ENCODE measurements at regions of chr22 and their contacts with region 1.

Region 1: DNA sequence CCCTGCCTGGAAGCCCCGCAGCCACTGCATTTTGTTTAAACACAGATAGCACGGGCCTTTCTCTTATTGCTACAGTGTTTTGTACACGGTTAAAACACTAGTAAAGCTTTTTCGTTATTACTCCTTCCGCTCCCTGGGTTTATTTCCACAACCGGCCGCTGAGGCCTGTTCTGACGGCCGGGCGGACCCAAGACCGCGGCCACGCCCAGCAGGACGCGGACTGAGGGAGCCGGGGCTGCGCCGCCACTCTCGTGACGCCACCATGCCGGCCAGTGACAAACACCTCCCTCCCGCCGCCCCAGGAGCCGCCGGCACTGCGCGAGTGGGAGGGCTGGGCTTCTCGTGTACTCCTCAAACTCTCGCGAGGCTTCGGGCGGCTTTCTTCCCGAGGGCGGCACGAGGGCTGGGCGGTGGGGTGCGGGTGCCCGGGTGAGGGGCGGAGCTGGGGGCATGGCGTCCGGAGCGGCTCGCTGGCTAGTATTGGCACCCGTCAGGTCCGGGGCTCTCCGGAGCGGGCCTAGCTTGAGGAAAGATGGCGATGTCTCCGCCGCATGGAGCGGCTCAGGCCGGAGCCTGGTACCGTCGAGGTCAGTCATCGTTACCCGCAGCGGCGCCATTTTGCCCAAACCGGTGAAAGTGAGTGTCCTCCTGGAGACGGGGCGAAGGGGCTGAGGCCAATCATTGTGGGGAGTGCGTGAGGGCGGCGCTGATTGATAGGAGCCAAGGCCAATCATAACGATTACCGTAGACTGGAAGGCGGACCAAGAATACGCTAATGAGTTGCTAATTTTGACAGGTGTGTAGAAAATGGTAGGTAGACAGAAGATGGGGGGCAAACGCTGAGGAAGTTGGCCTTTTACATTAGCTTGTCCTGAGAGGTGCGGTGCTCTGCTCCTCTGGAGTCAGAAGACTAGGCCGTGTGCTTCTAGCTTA is at the start of gene SMDT1:
- DNase-seq: peak; percentile 92 to 100
- H3K4me3 ChIP-seq: peak within 1 kb of the TSS; percentile 67 to 72
- H3K27ac ChIP-seq: peak within 1 kb of the TSS; percentile 95 to 96
- H3K4me1 ChIP-seq: peaks cover 0 to 38% of the 10 kb centered on the region in 2 donors
- H3K27me3 ChIP-seq: no peaks in the 10 kb centered on the region
- CTCF ChIP-seq: no peak
- total RNA-seq, gene SMDT1: 1.3 TPM

Region 2: DNA sequence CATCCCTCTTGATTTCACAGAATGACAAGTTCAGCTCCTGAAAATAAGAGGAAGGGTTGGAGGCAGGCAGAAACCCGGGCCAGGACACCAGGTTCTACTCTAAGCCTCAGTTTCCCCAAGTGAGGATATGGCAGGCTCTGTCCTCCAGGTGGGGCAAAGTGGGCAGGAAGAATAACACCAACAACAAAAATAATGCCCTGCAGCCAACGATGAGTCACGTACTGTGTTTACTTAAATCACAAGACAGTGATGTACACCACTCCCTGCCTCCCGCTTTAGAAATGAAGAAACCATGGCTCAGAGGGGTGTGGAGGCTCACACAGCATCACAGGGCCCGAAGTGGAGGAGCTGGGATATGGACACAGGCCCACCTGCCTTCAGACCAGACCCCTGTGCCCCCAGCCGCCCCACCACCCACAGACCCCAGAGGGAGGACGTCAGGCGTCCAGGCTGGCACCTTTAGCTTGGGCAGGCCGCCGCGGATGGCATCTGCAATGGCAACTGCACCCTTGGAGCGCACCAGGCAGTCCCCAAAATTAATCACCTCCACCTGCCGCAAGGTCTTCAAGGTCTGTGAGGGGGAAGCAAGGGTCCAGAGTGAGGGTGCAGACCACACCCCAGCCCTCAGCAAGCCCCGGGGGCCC is 823.2 kb before region 1 on chr22:
- intact Hi-C with region 1: no loop called
- DNase-seq: no peak
- H3K4me3 ChIP-seq: no peak overlapping the region
- H3K27ac ChIP-seq: no peak overlapping the region
- H3K4me1 ChIP-seq: no peaks in the 10 kb centered on the region
- H3K27me3 ChIP-seq: no peaks in the 10 kb centered on the region
- CTCF ChIP-seq: no peak

Region 3: GRCh38 chr22:41832553-41833368 is 246.8 kb before region 1 on chr22 and contains the start of gene SREBF2:
- intact Hi-C with region 1: loop called (anchors 1 kb)
- DNase-seq: peak; percentile 99 to 100
- H3K4me3 ChIP-seq: peak within 1 kb of the TSS; percentile 90 to 97
- H3K27ac ChIP-seq: peak within 1 kb of the TSS; percentile 92
- H3K4me1 ChIP-seq: peaks cover 0 to 5% of the 10 kb centered on the region in 2 donors
- H3K27me3 ChIP-seq: no peaks in the 10 kb centered on the region
- CTCF ChIP-seq: peak in 1 of 3 experiments; percentile 8
- total RNA-seq, gene SREBF2: 46.1 TPM

Region 4: DNA sequence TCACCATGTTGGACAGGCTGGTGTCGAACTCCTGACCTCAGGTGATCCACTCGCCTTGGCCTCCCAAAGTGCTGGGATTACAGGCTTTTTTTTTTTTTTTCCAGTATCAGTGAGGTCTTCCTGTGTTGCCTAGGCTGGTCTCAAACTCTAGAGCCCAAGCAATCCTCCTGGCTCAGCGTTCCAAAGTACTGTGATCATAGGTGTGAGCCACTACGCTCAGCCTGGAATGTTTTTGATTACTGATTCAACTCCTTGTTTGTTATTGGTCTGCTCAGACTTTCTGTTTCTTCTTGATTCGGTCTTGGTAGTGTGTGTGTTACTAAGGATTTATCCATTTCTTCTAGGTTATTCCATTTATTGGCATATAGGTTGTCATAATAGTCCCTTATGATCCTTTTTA is 40.3 kb before region 1 on chr22:
- intact Hi-C with region 1: no loop called
- DNase-seq: no peak
- H3K4me3 ChIP-seq: no peak overlapping the region
- H3K27ac ChIP-seq: no peak overlapping the region
- H3K4me1 ChIP-seq: no peaks in the 10 kb centered on the region
- H3K27me3 ChIP-seq: no peaks in the 10 kb centered on the region
- CTCF ChIP-seq: no peak

Region 5: DNA sequence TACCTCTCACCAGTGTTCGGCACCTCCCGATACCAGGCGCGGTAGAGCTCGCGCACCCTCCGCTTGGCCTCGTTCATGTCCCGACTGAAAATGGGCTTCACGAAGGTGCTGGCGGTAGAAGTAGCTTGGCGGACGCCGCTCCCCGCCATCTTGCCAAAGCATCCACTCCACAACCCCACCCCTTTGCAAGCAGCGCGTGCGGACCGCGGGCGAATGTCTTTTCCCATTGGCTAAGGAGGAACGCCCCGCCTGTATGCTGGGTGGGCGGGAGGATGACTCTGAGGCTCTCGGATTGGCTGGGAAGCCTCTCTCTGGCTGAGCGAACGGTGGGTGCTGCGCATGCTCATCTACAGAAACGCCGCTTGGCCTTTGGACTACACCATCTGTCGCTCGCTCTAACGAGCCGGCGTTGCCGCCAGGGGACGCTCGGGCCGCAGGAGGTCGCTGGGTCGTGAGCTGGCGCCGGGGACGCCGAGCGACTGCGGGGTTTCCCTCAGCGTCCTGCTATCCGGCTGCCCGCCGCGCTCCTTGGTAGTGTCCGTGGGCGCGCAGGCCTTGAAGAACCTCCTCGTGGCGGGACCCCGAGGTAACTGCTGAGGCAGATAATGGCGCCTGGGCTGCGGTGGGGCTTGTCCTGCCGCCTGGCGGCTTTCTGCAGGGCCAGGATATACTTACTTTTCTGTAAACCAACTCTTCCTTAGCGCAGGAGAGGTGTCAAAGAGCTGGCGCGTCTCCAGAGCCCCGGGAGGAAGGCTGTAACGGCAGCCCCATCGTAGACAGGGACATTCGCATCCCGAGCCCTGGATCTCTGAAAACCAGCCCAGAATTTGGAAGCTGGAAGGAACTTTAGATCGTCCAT is 11.2 kb after region 1 on chr22 and contains the start of gene NDUFA6:
- intact Hi-C with region 1: loop called (anchors 1 kb)
- DNase-seq: peak; percentile 98 to 99
- H3K4me3 ChIP-seq: peak within 1 kb of the TSS; percentile 79 to 91
- H3K27ac ChIP-seq: peak within 1 kb of the TSS; percentile 93 to 97
- H3K4me1 ChIP-seq: peaks cover 5 to 16% of the 10 kb centered on the region in 2 donors
- H3K27me3 ChIP-seq: no peaks in the 10 kb centered on the region
- CTCF ChIP-seq: peak; percentile 90 to 98 (median 95)
- total RNA-seq, gene NDUFA6: 23.9 TPM

Region 6: DNA sequence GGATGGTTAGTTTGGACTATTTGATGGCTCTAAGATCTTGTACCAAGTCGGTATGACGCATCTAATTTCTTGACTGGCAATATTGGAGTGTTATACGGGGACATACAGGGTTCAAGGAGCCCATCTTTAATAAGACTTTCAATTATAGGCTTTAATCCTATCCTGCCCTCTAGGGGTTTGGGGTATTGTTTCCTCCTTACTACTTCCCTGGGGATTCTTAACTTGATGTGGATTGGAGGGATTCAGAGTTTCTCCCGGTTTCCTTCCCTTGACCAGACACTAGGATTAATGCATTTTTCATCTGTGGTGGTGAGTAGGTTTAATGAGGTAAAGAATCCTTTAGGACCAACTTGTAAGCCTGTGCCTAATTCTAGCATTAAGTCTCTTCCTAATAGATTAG is 32.2 kb after region 1 on chr22:
- intact Hi-C with region 1: no loop called
- DNase-seq: no peak
- H3K4me3 ChIP-seq: no peak overlapping the region
- H3K27ac ChIP-seq: no peak overlapping the region
- H3K4me1 ChIP-seq: no peaks in the 10 kb centered on the region
- H3K27me3 ChIP-seq: no peaks in the 10 kb centered on the region
- CTCF ChIP-seq: no peak

Region 7: GRCh38 chr22:42343551-42344081 is 264.0 kb after region 1 on chr22:
- intact Hi-C with region 1: loop called (anchors 5 kb)
- DNase-seq: no peak
- H3K4me3 ChIP-seq: peak overlapping the region; percentile 54 to 71
- H3K27ac ChIP-seq: peak overlapping the region; percentile 77 to 81
- H3K4me1 ChIP-seq: peaks cover 0 to 6% of the 10 kb centered on the region in 2 donors
- H3K27me3 ChIP-seq: no peaks in the 10 kb centered on the region
- CTCF ChIP-seq: no peak

Region 8: GRCh38 chr22:42369245-42370041 is 289.9 kb after region 1 on chr22:
- intact Hi-C with region 1: loop called (anchors 5 kb)
- DNase-seq: peak; percentile 85 to 94
- H3K4me3 ChIP-seq: peak overlapping the region; percentile 65 to 66
- H3K27ac ChIP-seq: no peak overlapping the region
- H3K4me1 ChIP-seq: peaks cover 20 to 37% of the 10 kb centered on the region in 2 donors
- H3K27me3 ChIP-seq: no peaks in the 10 kb centered on the region
- CTCF ChIP-seq: no peak

Region 9: GRCh38 chr22:43187171-43188099 is 1107.8 kb after region 1 on chr22:
- intact Hi-C with region 1: loop called (anchors 10 kb)
- DNase-seq: peak; percentile 80 to 98
- H3K4me3 ChIP-seq: peak overlapping the region; percentile 52 to 96
- H3K27ac ChIP-seq: peak overlapping the region; percentile 91 to 95
- H3K4me1 ChIP-seq: peaks cover 0 to 19% of the 10 kb centered on the region in 2 donors
- H3K27me3 ChIP-seq: no peaks in the 10 kb centered on the region
- CTCF ChIP-seq: peak; percentile 45 to 74 (median 65)